ENCODE measurements at regions of chr19 and their contacts with region 1.

Region 1: GRCh38 chr19:16355293-16356043 is 30.8 kb downstream of the KLF2 start:
- DNase-seq: no peak
- H3K4me3 ChIP-seq: peak overlapping the region in 1 of 3 donors; percentile 47
- H3K27ac ChIP-seq: no peak overlapping the region
- H3K4me1 ChIP-seq: no peaks in the 10 kb centered on the region
- H3K27me3 ChIP-seq: no peaks in the 10 kb centered on the region
- CTCF ChIP-seq: no peak
- POLR2A ChIP-seq: no peak

Region 2: DNA sequence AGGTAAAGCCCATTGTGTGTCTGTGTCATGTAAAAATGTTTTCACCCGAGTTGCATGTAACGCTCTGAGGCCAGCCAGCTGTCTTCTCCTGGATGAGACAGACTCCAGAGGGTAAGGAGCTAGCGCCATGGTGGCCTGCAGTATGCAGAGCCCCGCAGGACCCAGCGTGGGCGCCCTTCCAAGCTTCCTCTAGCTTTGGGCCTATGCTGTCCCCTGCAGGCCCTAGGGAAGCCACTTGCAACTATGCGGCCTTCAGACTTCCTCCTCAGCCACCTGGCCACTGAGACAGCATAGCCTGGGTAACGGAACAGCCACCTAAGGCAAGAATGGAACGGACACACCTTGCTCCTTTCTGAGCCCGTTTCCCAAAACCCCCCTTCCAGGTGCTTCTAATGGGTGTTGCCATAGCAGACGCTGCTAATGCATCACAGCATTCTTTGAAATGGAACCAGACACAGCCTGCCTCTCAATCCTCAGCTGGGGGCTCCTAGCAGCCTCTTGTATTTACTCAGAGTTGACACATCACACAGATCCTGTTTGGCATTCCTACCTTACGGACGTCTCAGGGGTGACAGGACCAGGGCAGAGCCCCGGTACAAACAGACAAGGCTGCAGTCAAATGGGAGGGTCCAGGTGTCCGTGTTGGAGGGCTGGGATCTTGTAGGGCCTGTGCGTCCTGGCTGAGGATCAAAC is 164.1 kb before region 1 on chr19:
- intact Hi-C with region 1: loop called (anchors 2 kb)
- DNase-seq: no peak
- H3K4me3 ChIP-seq: no peak overlapping the region
- H3K27ac ChIP-seq: no peak overlapping the region
- H3K4me1 ChIP-seq: peaks cover 0 to 5% of the 10 kb centered on the region in 2 donors
- H3K27me3 ChIP-seq: no peaks in the 10 kb centered on the region
- CTCF ChIP-seq: no peak
- POLR2A ChIP-seq: no peak

Region 3: DNA sequence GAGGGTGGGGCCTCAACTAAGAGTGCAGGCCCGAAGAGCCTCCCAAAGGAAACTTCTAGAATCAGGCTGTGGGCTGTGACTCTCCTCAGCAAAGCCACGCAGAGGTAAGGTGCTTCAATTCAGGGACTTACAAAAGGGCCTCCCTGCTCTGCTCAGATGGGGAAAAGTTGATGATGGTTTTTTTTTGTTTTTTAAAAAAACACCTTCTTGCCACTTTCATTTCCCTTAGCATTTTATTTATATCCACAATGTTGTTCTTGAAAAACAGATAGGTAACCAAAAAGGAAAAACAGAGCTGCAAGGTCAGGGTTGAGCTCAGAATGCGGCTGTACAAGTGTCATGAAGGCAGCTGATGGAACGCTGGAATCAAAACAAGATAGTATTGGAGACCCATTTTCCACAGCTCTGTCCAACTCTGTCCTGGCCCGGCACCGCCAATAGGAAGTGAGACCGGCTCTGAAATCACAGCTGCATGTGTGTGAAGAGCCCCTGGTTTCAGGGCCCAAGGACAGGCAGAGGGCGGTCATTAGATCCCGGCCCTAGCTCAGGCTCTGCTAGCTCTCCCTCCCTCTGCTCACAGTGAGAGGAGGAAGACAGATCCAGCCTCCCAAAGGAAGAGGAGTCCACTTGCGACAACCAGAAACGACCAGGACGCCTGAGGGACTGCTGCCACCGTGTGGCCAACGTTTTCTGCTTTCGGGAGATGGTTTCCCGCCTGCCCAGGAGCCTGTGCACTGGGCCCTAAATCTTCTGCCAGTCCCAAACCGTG is 27.5 kb after region 1 on chr19:
- intact Hi-C with region 1: no loop called
- DNase-seq: peak; percentile 74 to 84
- H3K4me3 ChIP-seq: no peak overlapping the region
- H3K27ac ChIP-seq: peak overlapping the region; percentile 73 to 87
- H3K4me1 ChIP-seq: no peaks in the 10 kb centered on the region
- H3K27me3 ChIP-seq: no peaks in the 10 kb centered on the region
- CTCF ChIP-seq: peak; percentile 60 to 85 (median 81)
- POLR2A ChIP-seq: no peak

Measured in breast epithelium (tissue), 4 donors.